Right cardiac atrium (tissue), 5 donors: ENCODE measurements at regions of chr2 and their contacts with region 1.

Region 1: GRCh38 chr2:164841719-164842623 is at the start of gene COBLL1:
- DNase-seq: peak; percentile 68 to 87 (median 87)
- ATAC-seq: peak; percentile 87 to 88
- H3K4me3 ChIP-seq: peak within 1 kb of the TSS; percentile 91
- H3K27ac ChIP-seq: peak within 1 kb of the TSS; percentile 99
- H3K4me1 ChIP-seq: no peaks in the 10 kb centered on the region
- H3K27me3 ChIP-seq: no peaks in the 10 kb centered on the region
- total RNA-seq, gene COBLL1: 7.3 to 9.2 (median 8.6) TPM

Region 2: DNA sequence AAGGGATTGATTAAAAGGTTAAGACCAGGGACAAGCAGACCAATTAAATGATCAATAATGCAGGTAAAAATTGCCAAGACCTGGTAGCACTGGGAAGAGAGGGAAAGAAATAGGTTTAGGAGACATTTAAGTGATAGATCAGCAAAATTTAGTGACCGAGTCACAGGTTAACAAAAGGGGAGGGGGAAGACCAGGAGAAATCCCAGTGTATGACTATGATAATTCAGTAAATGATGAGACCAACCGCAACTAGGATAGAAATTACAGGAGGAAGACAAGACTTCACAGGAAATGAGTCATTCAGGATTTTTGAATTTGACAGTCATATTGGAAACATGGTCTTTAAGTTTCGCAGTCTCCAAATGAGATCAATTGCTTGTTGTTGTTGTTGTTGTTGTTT is 63.2 kb before region 1 on chr2:
- intact Hi-C with region 1: loop called in 1 of 4 experiments (anchors 10 kb)
- DNase-seq: no peak
- ATAC-seq: no peak
- H3K4me3 ChIP-seq: no peak overlapping the region
- H3K27ac ChIP-seq: no peak overlapping the region
- H3K4me1 ChIP-seq: peaks cover 1% of the 10 kb centered on the region
- H3K27me3 ChIP-seq: no peaks in the 10 kb centered on the region

Region 3: GRCh38 chr2:164903204-164903603 is 61.2 kb after region 1 on chr2:
- intact Hi-C with region 1: loop called in 1 of 4 experiments (anchors 10 kb)
- DNase-seq: no peak
- ATAC-seq: no peak
- H3K4me3 ChIP-seq: no peak overlapping the region
- H3K27ac ChIP-seq: no peak overlapping the region
- H3K4me1 ChIP-seq: no peaks in the 10 kb centered on the region
- H3K27me3 ChIP-seq: no peaks in the 10 kb centered on the region